ENCODE measurements at regions of chr10 and their contacts with region 1.

Region 1: DNA sequence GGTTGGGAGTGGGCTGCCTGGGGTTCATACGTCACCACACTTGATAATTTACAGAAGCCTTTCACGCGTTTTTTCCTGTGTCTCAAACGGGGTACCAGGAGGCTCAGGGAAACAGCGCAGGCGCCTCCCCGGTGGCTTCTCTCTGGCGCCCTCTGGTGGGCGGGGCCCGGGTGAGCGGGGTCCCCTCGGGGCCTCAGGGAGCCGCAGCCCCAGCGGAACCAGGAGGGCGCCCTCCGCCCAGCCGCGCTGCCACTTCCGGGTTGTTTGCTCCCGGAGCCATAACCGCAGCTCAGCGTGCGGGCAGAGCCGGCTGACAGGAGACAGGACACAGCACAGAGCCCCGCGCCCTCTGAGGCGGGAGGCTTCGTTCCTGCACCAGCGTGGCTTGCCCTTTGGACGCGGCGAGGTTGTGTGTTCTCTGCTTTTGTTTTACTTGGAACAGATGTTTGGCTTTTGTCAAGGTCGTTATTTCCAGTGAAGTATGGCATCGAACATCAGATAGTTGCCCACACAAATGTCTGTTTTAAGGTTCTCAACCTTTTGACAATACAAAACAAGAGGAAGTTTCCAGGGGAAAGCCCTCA is 6.9 kb upstream of the CYP2E1 start:
- DNase-seq: peak; percentile 82 to 88 (median 83)
- H3K4me3 ChIP-seq: peak overlapping the region in 1 of 2 donors; percentile 36
- H3K4me3 Mint-ChIP-seq: peak overlapping the region; percentile 60 to 79 (median 67)
- H3K27ac ChIP-seq: no peak overlapping the region
- H3K27ac Mint-ChIP-seq: peak overlapping the region; percentile 29 to 69 (median 48)
- H3K4me1 ChIP-seq: peaks cover 13% of the 10 kb centered on the region
- H3K4me1 Mint-ChIP-seq: peaks cover 5 to 20% (median 14%) of the 10 kb centered on the region in 4 donors
- H3K27me3 ChIP-seq: no peaks in the 10 kb centered on the region
- H3K27me3 Mint-ChIP-seq: peaks cover 0 to 1% of the 10 kb centered on the region in 2 donors

Region 2: GRCh38 chr10:133438711-133439273 is 81.5 kb before region 1 on chr10:
- CTCF ChIA-PET with region 1: interaction called, 9 read pairs
- POLR2A ChIA-PET with region 1: interaction called, 3 read pairs
- intact Hi-C with region 1: loop called (anchors 2 kb)
- DNase-seq: peak in 4 of 5 donors; percentile 31 to 42 (median 39)
- H3K4me3 ChIP-seq: no peak overlapping the region
- H3K4me3 Mint-ChIP-seq: peak overlapping the region in 4 of 8 donors; percentile 5 to 32 (median 13)
- H3K27ac ChIP-seq: no peak overlapping the region
- H3K27ac Mint-ChIP-seq: peak overlapping the region in 3 of 7 donors; percentile 30 to 49 (median 45)
- H3K4me1 ChIP-seq: peaks cover 41% of the 10 kb centered on the region
- H3K4me1 Mint-ChIP-seq: peaks cover 16 to 46% (median 36%) of the 10 kb centered on the region in 4 donors
- H3K27me3 ChIP-seq: no peaks in the 10 kb centered on the region
- H3K27me3 Mint-ChIP-seq: peaks cover 4 to 7% of the 10 kb centered on the region in 2 donors

Region 3: DNA sequence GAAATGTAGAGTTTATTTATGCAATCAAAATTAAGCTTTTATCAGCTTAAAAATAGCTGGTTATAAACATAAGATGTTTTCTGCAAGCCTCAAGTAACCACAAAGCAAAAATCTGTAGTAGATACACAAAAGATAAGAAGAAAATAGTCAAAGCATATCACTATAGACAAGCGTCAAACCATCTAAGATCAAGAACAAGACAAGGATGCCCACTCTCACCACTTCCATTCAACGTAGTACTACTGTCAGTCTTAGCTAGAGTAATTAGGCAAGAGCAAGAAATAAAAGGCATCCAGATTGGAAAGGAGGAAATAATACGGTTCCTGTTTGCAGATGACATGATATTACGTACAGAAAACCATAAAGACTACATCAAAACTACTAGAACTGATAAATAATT is 10.5 kb before region 1 on chr10:
- CTCF ChIA-PET with region 1: interaction called, 10 read pairs
- POLR2A ChIA-PET with region 1: interaction called, 3 read pairs
- intact Hi-C with region 1: no loop called
- DNase-seq: peak in 2 of 5 donors; percentile 15 to 53
- H3K4me3 ChIP-seq: no peak overlapping the region
- H3K4me3 Mint-ChIP-seq: no peak overlapping the region
- H3K27ac ChIP-seq: no peak overlapping the region
- H3K27ac Mint-ChIP-seq: peak overlapping the region in 1 of 7 donors; percentile 3
- H3K4me1 ChIP-seq: no peaks in the 10 kb centered on the region
- H3K4me1 Mint-ChIP-seq: peaks cover 0 to 11% (median 2%) of the 10 kb centered on the region in 4 donors
- H3K27me3 ChIP-seq: no peaks in the 10 kb centered on the region
- H3K27me3 Mint-ChIP-seq: peaks cover 10 to 12% of the 10 kb centered on the region in 2 donors